PC-9 (cell line): ENCODE measurements at regions of chr14 and their contacts with region 1.

Region 1: DNA sequence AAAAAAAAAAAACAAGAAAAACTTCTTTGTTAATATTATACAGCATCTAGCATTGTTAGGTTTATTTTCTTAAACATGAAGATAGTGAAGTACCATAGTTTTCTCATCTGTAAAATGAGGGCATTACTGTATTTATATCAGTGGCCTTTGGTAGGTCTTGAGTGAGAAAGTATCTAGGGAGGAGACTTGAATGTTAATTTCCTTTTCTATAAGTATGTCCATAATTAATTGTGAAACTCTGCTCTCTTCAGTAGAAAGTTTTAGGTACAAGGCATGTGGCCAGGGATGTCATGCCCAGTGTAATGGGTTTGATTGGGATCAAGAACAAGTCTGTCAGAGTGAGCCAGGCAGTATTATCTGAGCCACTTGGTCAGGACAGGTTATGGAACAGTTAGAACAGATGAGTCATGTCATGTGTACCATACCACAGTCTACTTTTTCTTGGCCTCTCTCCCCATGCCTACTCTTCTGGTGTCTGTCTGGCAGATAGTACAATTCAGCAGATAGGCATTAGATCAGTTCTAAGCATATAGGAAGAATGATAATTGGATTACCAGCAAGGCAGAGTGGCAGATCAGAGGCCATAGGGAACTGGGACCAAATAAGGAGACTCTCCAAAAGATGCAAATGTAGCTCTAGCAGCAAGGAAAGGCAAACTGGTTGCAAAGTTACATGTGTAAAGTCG is 30.4 kb downstream of the FBXO34 start:
- DNase-seq: no peak
- H3K4me3 ChIP-seq: no peak overlapping the region
- H3K27ac ChIP-seq: no peak overlapping the region
- H3K4me1 ChIP-seq: no peaks in the 10 kb centered on the region
- H3K27me3 ChIP-seq: no peaks in the 10 kb centered on the region
- CTCF ChIP-seq: no peak

Region 2: DNA sequence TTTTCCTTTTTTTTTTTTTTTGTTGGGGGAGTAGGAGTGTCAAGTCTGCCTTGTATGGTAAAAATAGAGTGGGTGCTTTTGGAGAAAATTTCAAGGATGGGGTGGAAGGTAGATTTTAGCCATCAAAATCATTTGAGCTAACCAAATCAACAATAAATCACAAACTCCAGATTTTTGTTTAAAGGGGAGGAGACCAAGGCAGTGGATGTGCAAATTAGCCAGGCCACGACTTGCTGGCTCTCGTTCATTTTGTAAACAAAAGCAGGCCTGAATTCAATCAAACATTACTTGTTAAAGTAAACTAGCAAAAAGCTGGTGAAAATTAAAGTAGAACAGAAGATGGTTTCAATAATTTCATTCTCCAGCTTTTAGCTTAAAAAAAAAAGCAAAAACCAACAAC is 1732.1 kb before region 1 on chr14:
- CTCF ChIA-PET with region 1: interaction called, 13 read pairs
- POLR2A ChIA-PET with region 1: no interaction called
- intact Hi-C with region 1: no loop called
- DNase-seq: no peak
- H3K4me3 ChIP-seq: no peak overlapping the region
- H3K27ac ChIP-seq: no peak overlapping the region
- H3K4me1 ChIP-seq: no peaks in the 10 kb centered on the region
- H3K27me3 ChIP-seq: no peaks in the 10 kb centered on the region
- CTCF ChIP-seq: no peak

Region 3: GRCh38 chr14:55446218-55446654 is 144.7 kb after region 1 on chr14:
- CTCF ChIA-PET with region 1: no interaction called
- POLR2A ChIA-PET with region 1: no interaction called
- intact Hi-C with region 1: no loop called
- DNase-seq: peak in 1 of 2 experiments; percentile 49
- H3K4me3 ChIP-seq: no peak overlapping the region
- H3K27ac ChIP-seq: peak overlapping the region; percentile 86; the same call in 1 of the 2 replicates
- H3K4me1 ChIP-seq: peaks cover 49% of the 10 kb centered on the region
- H3K27me3 ChIP-seq: no peaks in the 10 kb centered on the region
- CTCF ChIP-seq: peak; percentile 88